PC-9 (cell line): ENCODE measurements at regions of chr3 and their contacts with region 1.

Region 1: DNA sequence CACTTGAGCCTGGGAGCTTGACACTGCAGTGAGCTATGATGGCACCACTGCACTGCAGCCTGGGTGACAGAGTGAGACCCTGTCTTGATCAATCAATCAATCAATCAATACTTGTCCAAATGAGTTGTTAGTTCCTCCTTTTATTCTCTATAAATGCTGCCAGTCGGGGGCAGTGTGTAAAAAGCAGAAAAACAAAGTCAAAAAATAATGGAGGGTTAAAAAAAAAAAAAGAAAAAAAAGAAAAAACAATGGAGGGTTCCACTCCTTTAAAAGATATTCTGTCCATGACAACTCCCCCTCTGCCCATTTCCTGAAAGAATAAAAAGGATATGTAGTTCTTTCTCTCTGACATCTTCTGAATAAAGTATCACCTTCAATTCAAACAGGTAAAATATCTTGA is 1068.6 kb downstream of the FHIT start:
- DNase-seq: no peak
- H3K4me3 ChIP-seq: no peak overlapping the region
- H3K27ac ChIP-seq: no peak overlapping the region
- H3K4me1 ChIP-seq: no peaks in the 10 kb centered on the region
- H3K27me3 ChIP-seq: no peaks in the 10 kb centered on the region
- CTCF ChIP-seq: no peak

Region 2: DNA sequence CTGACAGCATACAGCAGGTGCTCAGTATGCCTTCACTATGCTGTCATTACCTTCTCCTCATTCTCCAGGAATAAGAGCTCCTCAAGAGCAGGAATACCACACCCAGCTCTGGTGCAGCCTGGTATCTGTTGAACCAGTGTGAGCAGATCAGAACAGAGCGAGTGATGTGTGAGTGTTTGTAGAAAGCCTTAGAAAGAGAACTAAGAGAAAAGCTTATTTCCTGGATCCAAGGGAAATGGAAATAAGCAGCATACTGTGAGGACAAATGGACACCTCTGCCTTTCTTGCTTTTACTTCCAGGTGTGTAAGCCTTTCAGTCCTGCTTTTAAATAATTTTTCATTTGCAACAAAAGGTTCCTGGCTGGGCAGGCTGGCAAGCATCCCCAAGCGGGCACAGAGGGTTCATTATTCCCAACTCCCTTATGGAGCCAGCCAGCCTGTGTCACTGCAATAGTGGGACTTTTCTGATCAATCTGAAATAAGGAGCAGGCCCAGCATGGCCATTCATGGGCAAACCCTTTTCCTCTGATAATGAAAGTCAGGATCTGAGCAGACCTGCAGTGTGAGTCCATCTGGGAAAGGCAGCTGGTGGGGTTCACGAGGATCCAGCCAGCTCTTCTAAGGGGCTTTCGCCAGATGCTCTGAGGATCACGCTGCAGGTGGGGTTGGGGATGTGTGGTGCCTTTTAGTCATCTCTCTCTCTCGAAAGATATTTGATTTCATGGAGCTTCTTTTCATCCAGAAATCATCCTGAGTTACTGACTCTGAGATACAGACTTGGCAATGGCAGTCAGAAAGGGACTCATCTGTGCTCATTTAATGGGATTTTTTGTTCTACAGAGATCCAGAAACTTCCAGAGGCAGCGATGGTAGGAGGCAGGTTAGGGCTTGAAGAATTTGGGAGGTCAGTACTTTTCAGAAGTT is 538.0 kb before region 1 on chr3:
- CTCF ChIA-PET with region 1: no interaction called
- POLR2A ChIA-PET with region 1: no interaction called
- intact Hi-C with region 1: no loop called
- DNase-seq: no peak
- H3K4me3 ChIP-seq: no peak overlapping the region
- H3K27ac ChIP-seq: no peak overlapping the region
- H3K4me1 ChIP-seq: no peaks in the 10 kb centered on the region
- H3K27me3 ChIP-seq: peaks cover 11% of the 10 kb centered on the region
- CTCF ChIP-seq: no peak

Region 3: GRCh38 chr3:60573494-60573893 is 390.8 kb after region 1 on chr3:
- CTCF ChIA-PET with region 1: interaction called, 17 read pairs
- POLR2A ChIA-PET with region 1: no interaction called
- intact Hi-C with region 1: no loop called
- DNase-seq: no peak
- H3K4me3 ChIP-seq: no peak overlapping the region
- H3K27ac ChIP-seq: no peak overlapping the region
- H3K4me1 ChIP-seq: no peaks in the 10 kb centered on the region
- H3K27me3 ChIP-seq: no peaks in the 10 kb centered on the region
- CTCF ChIP-seq: no peak

Region 4: GRCh38 chr3:61278713-61279112 is 1096.0 kb after region 1 on chr3:
- CTCF ChIA-PET with region 1: no interaction called
- POLR2A ChIA-PET with region 1: no interaction called
- intact Hi-C with region 1: no loop called
- DNase-seq: no peak
- H3K4me3 ChIP-seq: no peak overlapping the region
- H3K27ac ChIP-seq: no peak overlapping the region
- H3K4me1 ChIP-seq: no peaks in the 10 kb centered on the region
- H3K27me3 ChIP-seq: no peaks in the 10 kb centered on the region
- CTCF ChIP-seq: no peak